ENCODE measurements at regions of chr19 and their contacts with region 1.

Region 1: DNA sequence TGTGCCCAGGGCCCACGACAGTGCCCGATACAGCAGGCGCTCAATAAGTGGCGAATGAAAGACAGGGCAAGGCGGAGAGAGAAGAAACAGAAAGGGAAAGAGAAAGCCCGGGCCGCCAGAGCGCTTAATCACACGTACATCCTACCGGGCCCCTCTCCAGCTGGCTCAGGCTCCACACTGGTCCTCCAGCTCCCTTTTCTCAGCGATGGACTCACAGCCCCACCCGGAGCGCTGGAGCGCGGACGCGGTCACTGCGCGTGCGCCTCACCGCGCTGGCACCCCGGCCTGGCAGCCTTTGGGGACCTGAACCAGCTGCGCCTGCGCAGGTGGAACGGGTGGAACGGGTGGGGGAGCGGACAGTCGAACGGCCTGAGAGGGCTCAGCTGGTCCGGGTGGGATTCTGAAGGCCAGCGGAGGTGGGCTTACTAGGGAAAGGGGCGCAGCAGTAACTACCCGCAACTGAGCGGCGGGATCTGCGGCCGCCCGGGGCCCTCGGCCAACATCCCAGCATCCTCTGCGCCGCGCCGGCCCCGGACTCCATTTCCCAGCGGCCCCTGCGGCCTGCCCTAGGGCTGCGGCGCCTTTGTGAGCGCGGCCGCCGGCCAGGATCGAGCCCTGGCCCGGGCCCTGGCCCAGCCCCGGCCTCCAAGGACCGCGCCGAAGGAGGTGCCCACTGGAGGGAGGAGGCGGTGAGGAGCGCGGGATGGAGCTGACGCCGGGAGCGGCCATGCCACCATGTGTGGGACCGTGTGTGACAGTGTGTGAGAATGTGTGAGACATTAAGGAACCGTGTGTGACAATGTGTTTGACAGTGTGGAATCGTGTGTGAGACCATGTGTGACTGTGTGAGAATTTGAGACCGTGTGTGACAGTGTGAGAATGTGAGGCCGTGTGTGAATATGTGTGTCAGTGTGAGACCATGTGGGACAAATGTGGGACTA is at the start of gene ZNF583:
- DNase-seq: peak; percentile 94
- ATAC-seq: peak; percentile 84
- H3K4me3 Mint-ChIP-seq: peak within 1 kb of the TSS; percentile 80
- H3K27ac Mint-ChIP-seq: peak within 1 kb of the TSS; percentile 80
- H3K4me1 Mint-ChIP-seq: peaks cover 32% of the 10 kb centered on the region
- H3K27me3 Mint-ChIP-seq: no peaks in the 10 kb centered on the region
- total RNA-seq, gene ZNF583: 2.1 to 3.0 TPM

Region 2: DNA sequence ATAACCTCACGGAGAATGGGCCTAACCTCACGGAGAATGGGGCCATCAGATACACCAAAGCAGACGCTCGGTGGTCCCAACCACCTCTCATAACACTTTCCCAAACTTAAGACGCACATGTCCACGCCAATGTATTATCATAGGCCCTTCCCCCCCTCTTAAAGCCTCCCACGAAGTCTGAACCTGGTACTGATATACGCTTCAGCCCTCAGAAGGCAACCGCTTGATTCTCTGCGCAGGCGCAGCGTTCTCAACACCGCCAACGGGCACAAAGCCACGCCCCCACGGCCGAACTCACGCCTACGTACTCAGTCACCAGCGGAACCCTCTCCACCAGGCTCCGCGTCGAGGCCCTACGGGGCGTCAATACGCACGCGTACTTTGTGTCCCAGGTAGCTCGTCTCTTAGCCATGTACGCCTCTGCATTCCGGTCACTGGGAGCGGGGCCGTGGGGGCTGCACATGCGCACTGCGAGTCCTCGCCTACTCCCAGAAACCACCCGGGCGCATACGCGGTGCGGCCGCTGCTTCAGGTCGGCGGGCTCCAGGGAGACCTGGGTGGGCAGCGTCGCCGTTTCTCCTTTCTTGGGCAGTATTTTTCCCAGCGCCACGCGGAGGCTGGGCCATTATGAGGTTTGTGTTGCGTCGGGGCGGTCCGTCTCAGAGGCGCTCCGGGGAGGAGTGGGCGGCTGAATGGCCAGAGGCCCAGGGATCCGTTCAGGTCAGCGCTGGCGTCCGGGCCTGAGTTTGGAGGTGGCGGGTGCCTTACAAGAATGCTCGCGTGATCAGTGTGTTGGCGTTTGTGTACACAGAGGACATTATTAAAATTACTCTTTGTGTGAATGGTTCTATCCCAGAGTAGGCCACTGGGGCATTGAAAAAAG is 36.0 kb before region 1 on chr19:
- CTCF ChIA-PET with region 1: no interaction called
- POLR2A ChIA-PET with region 1: no interaction called
- intact Hi-C with region 1: loop called in 1 of 2 experiments (anchors 1 kb)
- DNase-seq: peak; percentile 92
- ATAC-seq: peak; percentile 99
- H3K4me3 Mint-ChIP-seq: peak overlapping the region; percentile 95
- H3K27ac Mint-ChIP-seq: peak overlapping the region; percentile 89
- H3K4me1 Mint-ChIP-seq: peaks cover 19% of the 10 kb centered on the region
- H3K27me3 Mint-ChIP-seq: no peaks in the 10 kb centered on the region

Region 3: DNA sequence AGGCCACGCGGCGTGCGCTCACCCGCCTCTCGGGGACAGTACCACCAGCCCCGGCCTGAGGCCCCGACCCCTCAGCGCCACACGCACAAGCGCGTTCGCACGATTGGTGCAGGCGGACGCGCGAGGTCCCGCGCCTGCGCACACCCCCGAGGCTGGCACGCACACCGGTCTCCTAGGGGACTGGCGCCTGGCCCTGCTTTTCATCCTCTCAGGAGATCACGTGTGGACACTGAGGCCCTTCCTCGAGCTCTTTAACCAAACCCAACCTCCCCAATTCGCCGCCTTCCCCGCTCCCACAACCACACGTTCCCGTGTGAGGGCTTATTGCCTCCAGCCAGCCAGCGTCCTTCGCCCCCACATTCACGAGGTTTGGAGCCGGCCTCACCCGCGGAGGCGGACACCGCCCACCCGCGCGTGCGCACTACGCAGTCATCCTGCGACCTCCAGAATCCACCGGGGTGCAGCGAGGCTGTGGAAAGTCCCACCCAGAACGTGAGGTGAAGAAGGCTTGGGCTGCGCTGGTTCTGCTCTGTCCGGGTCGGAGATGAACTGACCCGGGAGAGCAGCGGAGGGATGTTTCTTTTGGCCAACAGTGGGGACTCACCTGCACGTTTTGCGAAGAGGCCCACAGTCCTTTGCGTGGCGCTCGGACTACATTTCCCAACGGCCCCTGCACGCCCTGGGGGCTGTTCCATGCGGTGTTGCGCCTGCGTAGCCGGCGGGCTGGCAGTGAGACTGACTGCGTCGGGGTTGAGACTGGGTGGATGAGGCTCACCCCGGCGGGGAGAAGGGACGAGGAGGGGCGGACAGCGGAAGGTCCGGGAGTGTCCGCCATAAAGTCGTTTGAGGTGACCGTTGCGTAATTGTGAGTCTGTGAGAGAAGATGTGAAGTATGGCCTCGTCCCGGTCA is 73.7 kb after region 1 on chr19:
- CTCF ChIA-PET with region 1: no interaction called
- POLR2A ChIA-PET with region 1: no interaction called
- intact Hi-C with region 1: loop called (anchors 1 to 5 kb)
- DNase-seq: peak; percentile 86
- ATAC-seq: peak; percentile 87
- H3K4me3 Mint-ChIP-seq: peak overlapping the region; percentile 85
- H3K27ac Mint-ChIP-seq: peak overlapping the region; percentile 94
- H3K4me1 Mint-ChIP-seq: peaks cover 15% of the 10 kb centered on the region
- H3K27me3 Mint-ChIP-seq: peaks cover 13% of the 10 kb centered on the region

Region 4: GRCh38 chr19:56594783-56595547 is 190.9 kb after region 1 on chr19 and contains the start of gene ZNF71:
- CTCF ChIA-PET with region 1: no interaction called
- POLR2A ChIA-PET with region 1: no interaction called
- intact Hi-C with region 1: loop called (anchors 1 to 10 kb)
- DNase-seq: peak; percentile 94
- ATAC-seq: peak; percentile 98
- H3K4me3 Mint-ChIP-seq: peak within 1 kb of the TSS; percentile 87
- H3K27ac Mint-ChIP-seq: peak within 1 kb of the TSS; percentile 71
- H3K4me1 Mint-ChIP-seq: peaks cover 19% of the 10 kb centered on the region
- H3K27me3 Mint-ChIP-seq: no peaks in the 10 kb centered on the region
- total RNA-seq, gene ZNF71: 4.4 to 4.6 TPM

Region 5: DNA sequence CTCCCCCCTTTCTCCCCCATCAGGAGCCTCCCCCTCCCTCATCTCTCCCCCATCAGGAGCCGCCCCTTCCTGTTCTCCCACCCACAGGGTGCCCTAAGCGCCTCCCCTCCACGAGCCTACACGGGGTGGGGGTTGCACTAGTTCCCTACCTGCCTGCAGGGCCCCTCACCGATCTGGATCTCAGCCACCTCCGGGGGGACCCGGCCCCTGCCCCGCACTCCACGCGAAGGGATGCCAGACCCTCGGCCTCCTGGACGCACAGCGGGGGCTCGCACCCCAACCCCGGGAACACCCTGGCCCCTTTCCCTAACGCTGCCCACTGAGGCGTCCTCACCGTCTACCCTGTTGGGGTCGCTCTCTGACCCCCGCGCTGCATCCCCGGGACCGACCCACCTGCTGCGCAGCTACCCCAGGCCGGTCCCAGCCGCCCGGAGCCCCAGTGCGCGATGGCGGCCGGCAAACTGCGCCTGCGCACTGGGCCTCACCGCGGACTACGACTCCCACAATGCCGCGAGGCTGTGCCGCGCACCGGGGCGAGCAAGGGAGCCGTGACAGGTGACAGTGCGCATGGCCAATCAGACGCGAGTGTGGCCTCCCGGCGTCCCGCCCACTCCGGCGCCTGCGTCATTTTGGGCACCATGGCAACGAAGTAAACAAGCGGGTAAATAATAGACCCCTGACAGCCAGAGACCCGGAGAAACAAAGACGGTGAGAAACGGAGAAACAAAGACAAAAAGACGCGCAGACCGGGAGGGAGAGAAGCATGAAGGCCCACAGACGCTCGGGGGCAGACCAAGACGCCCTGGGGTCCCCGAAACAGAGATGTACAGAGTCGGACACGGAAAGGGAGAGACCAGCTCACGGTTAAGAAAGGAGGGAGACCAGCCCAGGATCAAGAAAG is 1694.0 kb after region 1 on chr19 and contains the start of gene ZSCAN18:
- CTCF ChIA-PET with region 1: no interaction called
- POLR2A ChIA-PET with region 1: no interaction called
- intact Hi-C with region 1: loop called in 1 of 2 experiments (anchors 5 kb)
- DNase-seq: peak; percentile 97
- ATAC-seq: peak; percentile 99
- H3K4me3 Mint-ChIP-seq: peak within 1 kb of the TSS; percentile 82
- H3K27ac Mint-ChIP-seq: peak within 1 kb of the TSS; percentile 97
- H3K4me1 Mint-ChIP-seq: peaks cover 13% of the 10 kb centered on the region
- H3K27me3 Mint-ChIP-seq: no peaks in the 10 kb centered on the region
- total RNA-seq, gene ZSCAN18: 23.1 to 29.2 TPM